ENCODE measurements at regions of chr22 and their contacts with region 1.

Region 1: GRCh38 chr22:36470162-36470993 is 11.1 kb downstream of the TXN2 start:
- DNase-seq: peak; percentile 86
- ATAC-seq: peak; percentile 95
- H3K4me3 Mint-ChIP-seq: no peak overlapping the region
- H3K27ac Mint-ChIP-seq: peak overlapping the region; percentile 57
- H3K4me1 Mint-ChIP-seq: peaks cover 28% of the 10 kb centered on the region
- H3K27me3 Mint-ChIP-seq: no peaks in the 10 kb centered on the region
- CTCF ChIP-seq: peak; percentile 93

Region 2: DNA sequence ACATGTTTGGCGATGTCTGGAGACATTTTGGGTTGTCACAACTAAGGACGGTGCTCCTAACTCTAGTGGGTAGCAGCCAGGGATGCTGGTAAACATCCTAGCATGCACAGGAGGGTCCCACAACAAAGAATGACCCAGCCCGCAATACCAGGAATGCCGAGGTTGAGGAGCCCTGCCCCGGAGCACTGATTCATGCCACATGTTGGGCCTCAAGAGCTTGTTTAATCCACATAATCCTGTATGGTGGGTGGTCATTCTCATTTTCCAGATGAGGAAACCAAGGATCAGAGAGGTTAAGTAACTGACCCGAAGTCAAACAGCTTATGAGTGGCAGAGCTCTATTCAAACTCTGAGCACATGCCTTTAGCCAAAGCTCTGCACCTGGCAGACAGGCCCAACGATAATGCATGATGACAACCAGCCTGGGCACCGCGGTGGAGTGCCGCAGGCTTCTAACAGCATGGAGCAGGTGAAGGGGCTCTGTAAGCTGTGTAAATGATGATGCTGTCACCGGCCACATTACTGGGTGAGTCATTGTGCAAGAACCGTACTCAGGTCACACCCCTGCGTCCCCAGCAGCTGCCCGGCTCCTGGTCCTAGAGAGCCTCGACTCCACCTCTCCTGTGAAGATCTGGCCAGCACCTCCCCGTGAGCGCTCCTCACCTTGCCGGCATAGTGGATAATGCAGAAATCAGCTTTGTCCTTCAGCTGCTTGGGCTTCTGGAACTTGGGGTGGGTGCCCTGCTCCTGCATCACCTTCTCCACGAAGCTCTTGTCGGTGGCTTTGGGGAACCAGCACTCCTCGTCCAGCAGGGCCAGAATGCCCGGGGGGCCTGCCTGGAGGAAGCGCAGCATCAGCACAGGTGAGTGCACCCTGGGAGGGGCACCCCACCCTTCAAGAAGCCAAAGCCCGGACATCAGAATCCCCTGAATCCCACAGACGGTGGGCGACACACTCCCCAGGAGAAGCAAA is 158.7 kb before region 1 on chr22:
- CTCF ChIA-PET with region 1: interaction called, 10 read pairs
- POLR2A ChIA-PET with region 1: interaction called, 3 read pairs
- intact Hi-C with region 1: no loop called
- DNase-seq: no peak
- ATAC-seq: no peak
- H3K4me3 Mint-ChIP-seq: no peak overlapping the region
- H3K27ac Mint-ChIP-seq: peak overlapping the region; percentile 30
- H3K4me1 Mint-ChIP-seq: peaks cover 6% of the 10 kb centered on the region
- H3K27me3 Mint-ChIP-seq: no peaks in the 10 kb centered on the region
- CTCF ChIP-seq: no peak

Region 3: GRCh38 chr22:36379593-36380361 is 90.6 kb before region 1 on chr22:
- CTCF ChIA-PET with region 1: interaction called, 19 read pairs
- POLR2A ChIA-PET with region 1: no interaction called
- intact Hi-C with region 1: no loop called
- DNase-seq: peak; percentile 61
- ATAC-seq: peak; percentile 29
- H3K4me3 Mint-ChIP-seq: peak overlapping the region; percentile 72
- H3K27ac Mint-ChIP-seq: peak overlapping the region; percentile 96
- H3K4me1 Mint-ChIP-seq: peaks cover 86% of the 10 kb centered on the region
- H3K27me3 Mint-ChIP-seq: no peaks in the 10 kb centered on the region
- CTCF ChIP-seq: no peak

Region 4: GRCh38 chr22:36387752-36388518 is 82.4 kb before region 1 on chr22 and contains the start of gene MYH9:
- CTCF ChIA-PET with region 1: interaction called, 19 read pairs
- POLR2A ChIA-PET with region 1: interaction called, 5 read pairs
- intact Hi-C with region 1: no loop called
- DNase-seq: peak; percentile 100
- ATAC-seq: peak; percentile 84
- H3K4me3 Mint-ChIP-seq: peak within 1 kb of the TSS; percentile 92
- H3K27ac Mint-ChIP-seq: peak within 1 kb of the TSS; percentile 96
- H3K4me1 Mint-ChIP-seq: peaks cover 27% of the 10 kb centered on the region
- H3K27me3 Mint-ChIP-seq: no peaks in the 10 kb centered on the region
- CTCF ChIP-seq: no peak
- total RNA-seq, gene MYH9: 624 to 679 TPM

Region 5: GRCh38 chr22:36454916-36455570 is 15.3 kb before region 1 on chr22:
- CTCF ChIA-PET with region 1: interaction called, 15 read pairs
- POLR2A ChIA-PET with region 1: interaction called, 4 read pairs
- intact Hi-C with region 1: no loop called
- DNase-seq: peak; percentile 98
- ATAC-seq: peak; percentile 75
- H3K4me3 Mint-ChIP-seq: peak overlapping the region; percentile 73
- H3K27ac Mint-ChIP-seq: peak overlapping the region; percentile 83
- H3K4me1 Mint-ChIP-seq: peaks cover 38% of the 10 kb centered on the region
- H3K27me3 Mint-ChIP-seq: no peaks in the 10 kb centered on the region
- CTCF ChIP-seq: no peak

Region 6: DNA sequence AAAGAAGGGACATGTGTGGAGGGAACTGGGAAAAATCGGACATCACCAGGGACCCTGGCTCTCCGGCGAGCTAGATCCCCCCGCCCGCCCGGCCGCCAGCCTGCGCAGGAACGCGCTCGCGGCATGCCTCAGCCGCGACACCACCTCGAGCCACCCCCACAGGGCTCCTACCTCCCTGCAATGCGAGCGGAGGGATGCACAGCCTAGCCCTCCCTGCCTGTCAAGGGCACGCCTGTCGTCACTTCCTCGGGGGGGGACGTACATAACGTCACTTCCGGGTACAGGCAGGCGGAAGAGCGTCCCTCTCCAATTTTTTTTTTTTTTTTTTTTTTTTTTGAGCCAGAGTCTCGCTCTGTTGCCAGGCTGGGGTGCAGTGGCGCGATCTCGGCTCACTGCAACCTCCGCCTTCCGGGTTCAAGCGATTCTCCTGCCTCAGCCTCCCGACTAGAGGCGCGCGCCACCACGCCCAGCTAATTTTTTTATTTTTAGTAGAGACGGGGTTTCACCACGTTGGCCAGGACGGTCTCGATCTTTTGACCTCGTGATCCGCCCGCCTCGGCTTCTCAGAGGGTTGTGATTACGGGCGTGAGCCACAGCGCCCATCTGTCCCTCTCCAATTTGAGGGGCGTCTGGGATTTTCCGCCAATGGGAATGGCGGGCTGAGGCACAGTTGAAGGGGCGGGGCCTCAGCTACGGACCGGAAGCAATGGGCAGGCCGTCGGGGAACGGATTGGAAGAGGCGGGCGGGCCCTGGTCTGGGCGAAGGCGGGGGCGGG is 11.2 kb after region 1 on chr22 and contains the start of gene TXN2:
- CTCF ChIA-PET with region 1: interaction called, 13 read pairs
- POLR2A ChIA-PET with region 1: interaction called, 3 read pairs
- intact Hi-C with region 1: no loop called
- DNase-seq: peak; percentile 98
- ATAC-seq: peak; percentile 91
- H3K4me3 Mint-ChIP-seq: peak within 1 kb of the TSS; percentile 99
- H3K27ac Mint-ChIP-seq: peak within 1 kb of the TSS; percentile 97
- H3K4me1 Mint-ChIP-seq: peaks cover 18% of the 10 kb centered on the region
- H3K27me3 Mint-ChIP-seq: no peaks in the 10 kb centered on the region
- CTCF ChIP-seq: no peak
- total RNA-seq, gene TXN2: 96.5 to 101 TPM

Region 7: DNA sequence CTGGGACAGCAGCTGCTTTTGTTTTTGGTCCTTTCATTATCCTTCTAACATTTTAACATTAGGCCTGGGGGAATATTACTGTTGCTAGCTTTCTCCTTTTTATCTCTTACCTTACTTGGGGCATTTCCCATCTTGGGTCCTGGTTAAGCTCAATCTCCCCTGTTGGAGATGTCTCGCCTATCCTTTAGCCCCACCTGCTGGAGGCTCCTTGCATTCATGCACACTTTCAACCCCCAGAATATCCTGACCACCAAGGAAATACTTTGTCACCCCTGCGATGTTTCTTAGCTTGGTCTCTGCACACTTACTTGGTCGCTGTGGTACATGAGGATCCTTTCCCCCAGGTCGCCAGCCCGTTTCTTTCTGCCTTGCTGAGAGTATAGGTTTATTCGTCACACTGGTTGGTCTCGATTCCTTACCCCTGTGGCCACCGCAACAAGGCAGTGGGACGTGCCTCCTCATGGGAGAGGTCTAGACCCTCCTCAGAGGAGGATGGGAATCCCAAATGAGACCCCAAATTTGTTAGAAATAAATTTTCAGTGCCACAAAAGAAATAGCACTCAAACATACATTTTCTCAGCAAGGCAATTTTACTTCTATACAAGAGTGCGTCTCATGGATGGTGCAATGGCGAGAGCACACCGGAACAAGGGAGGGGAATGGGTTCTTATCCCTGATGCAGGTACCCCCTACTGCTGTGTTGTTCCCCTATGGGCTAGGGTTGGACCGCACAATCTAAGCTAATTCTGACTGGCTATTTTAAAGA is 16.4 kb after region 1 on chr22:
- CTCF ChIA-PET with region 1: interaction called, 13 read pairs
- POLR2A ChIA-PET with region 1: no interaction called
- intact Hi-C with region 1: no loop called
- DNase-seq: peak; percentile 80
- ATAC-seq: no peak
- H3K4me3 Mint-ChIP-seq: no peak overlapping the region
- H3K27ac Mint-ChIP-seq: no peak overlapping the region
- H3K4me1 Mint-ChIP-seq: peaks cover 8% of the 10 kb centered on the region
- H3K27me3 Mint-ChIP-seq: no peaks in the 10 kb centered on the region
- CTCF ChIP-seq: peak; percentile 69